Endothelial cell of umbilical vein (primary cell): ENCODE measurements at regions of chr7 and their contacts with region 1.

Region 1: DNA sequence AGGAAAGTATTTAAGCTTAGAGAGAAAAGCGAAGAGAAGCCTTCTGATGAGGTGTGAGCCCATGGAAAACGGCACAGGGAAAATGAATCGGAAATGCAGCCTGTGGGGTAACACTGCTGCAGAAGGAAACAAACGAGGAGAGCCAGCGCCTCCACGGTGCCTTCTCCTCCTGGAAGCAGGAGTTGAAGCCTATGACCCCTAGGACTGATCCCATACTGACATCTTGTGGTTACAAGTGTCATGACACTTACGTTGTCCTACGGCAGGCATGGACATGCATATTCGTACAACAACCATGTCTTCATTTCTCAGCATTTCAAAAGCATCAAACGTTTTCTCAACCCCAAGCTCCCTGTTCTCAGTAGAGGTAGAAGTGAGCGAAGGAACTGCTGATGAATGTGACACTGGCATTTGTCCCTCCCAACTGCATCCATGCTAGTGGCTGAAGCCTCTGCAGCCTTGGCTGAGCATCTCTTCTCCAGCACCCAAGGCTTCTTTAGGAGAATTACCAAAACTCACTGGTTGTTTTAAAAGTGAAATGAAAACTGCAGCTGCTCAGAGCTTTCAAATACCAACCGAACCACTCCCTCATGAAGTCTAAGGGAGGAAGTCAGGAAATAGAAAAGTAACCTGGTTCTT is 160.2 kb downstream of the JAZF1 start:
- DNase-seq: peak; percentile 80
- H3K4me3 ChIP-seq: no peak overlapping the region
- H3K27ac ChIP-seq: no peak overlapping the region
- H3K4me1 ChIP-seq: no peaks in the 10 kb centered on the region
- H3K27me3 ChIP-seq: no peaks in the 10 kb centered on the region
- CTCF ChIP-seq: peak; percentile 70 to 75
- POLR2A ChIP-seq: no peak

Region 2: GRCh38 chr7:27576360-27576944 is 444.0 kb before region 1 on chr7:
- CTCF ChIA-PET with region 1: no interaction called
- POLR2A ChIA-PET with region 1: no interaction called
- dilution Hi-C with region 1: no loop called
- intact Hi-C with region 1: loop called (anchors 5 kb)
- DNase-seq: peak; percentile 70
- H3K4me3 ChIP-seq: no peak overlapping the region
- H3K27ac ChIP-seq: no peak overlapping the region
- H3K4me1 ChIP-seq: no peaks in the 10 kb centered on the region
- H3K27me3 ChIP-seq: no peaks in the 10 kb centered on the region
- CTCF ChIP-seq: peak; percentile 22 to 26
- POLR2A ChIP-seq: no peak

Region 3: GRCh38 chr7:27689591-27690164 is 330.7 kb before region 1 on chr7:
- CTCF ChIA-PET with region 1: interaction called, 6 read pairs
- POLR2A ChIA-PET with region 1: no interaction called
- dilution Hi-C with region 1: no loop called
- intact Hi-C with region 1: loop called (anchors 1 kb)
- DNase-seq: peak; percentile 69
- H3K4me3 ChIP-seq: no peak overlapping the region
- H3K27ac ChIP-seq: no peak overlapping the region
- H3K4me1 ChIP-seq: peaks cover 10% of the 10 kb centered on the region
- H3K27me3 ChIP-seq: no peaks in the 10 kb centered on the region
- CTCF ChIP-seq: peak; percentile 42 to 72
- POLR2A ChIP-seq: no peak

Region 4: DNA sequence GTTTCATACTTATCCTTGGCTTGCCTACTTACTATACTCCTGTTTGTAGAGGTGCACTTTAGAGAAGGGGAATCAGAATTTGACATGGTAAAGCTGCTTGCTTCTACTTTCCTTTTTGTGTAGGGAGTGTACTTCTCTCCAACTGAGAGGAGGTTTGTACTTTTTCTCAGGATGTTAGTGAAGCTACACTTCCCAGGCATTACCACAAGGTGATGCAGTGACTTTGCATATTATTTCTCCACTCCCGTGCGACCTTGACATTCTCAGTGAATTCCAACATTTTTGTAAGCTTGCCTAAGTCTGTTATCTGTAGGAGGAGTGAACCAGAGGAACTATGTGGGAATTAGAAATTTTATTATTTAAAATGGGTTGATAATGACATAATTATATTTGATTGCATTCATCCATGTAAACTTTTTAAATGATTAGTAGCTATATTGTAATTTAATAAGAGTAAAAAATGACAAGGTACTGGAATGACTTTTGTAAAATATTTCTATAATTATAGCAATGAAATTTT is 275.3 kb before region 1 on chr7:
- CTCF ChIA-PET with region 1: interaction called, 12 read pairs
- POLR2A ChIA-PET with region 1: no interaction called
- dilution Hi-C with region 1: no loop called
- intact Hi-C with region 1: loop called (anchors 1 kb)
- DNase-seq: peak; percentile 85
- H3K4me3 ChIP-seq: no peak overlapping the region
- H3K27ac ChIP-seq: peak overlapping the region; percentile 49
- H3K4me1 ChIP-seq: peaks cover 11% of the 10 kb centered on the region
- H3K27me3 ChIP-seq: no peaks in the 10 kb centered on the region
- CTCF ChIP-seq: peak; percentile 54 to 65
- POLR2A ChIP-seq: no peak

Region 5: GRCh38 chr7:27784393-27785053 is 235.9 kb before region 1 on chr7:
- CTCF ChIA-PET with region 1: no interaction called
- POLR2A ChIA-PET with region 1: no interaction called
- dilution Hi-C with region 1: no loop called
- intact Hi-C with region 1: loop called (anchors 2 kb)
- DNase-seq: peak; percentile 85
- H3K4me3 ChIP-seq: no peak overlapping the region
- H3K27ac ChIP-seq: no peak overlapping the region
- H3K4me1 ChIP-seq: peaks cover 11% of the 10 kb centered on the region
- H3K27me3 ChIP-seq: no peaks in the 10 kb centered on the region
- CTCF ChIP-seq: peak; percentile 48 to 52
- POLR2A ChIP-seq: no peak

Region 6: GRCh38 chr7:27810186-27810585 is 210.2 kb before region 1 on chr7:
- CTCF ChIA-PET with region 1: no interaction called
- POLR2A ChIA-PET with region 1: no interaction called
- dilution Hi-C with region 1: no loop called
- intact Hi-C with region 1: loop called (anchors 10 kb)
- DNase-seq: no peak
- H3K4me3 ChIP-seq: no peak overlapping the region
- H3K27ac ChIP-seq: no peak overlapping the region
- H3K4me1 ChIP-seq: no peaks in the 10 kb centered on the region
- H3K27me3 ChIP-seq: no peaks in the 10 kb centered on the region
- CTCF ChIP-seq: no peak
- POLR2A ChIP-seq: no peak

Region 7: GRCh38 chr7:27933671-27934565 is 86.5 kb before region 1 on chr7:
- CTCF ChIA-PET with region 1: interaction called, 6 read pairs
- POLR2A ChIA-PET with region 1: no interaction called
- dilution Hi-C with region 1: no loop called
- intact Hi-C with region 1: loop called (anchors 2 kb)
- DNase-seq: peak; percentile 19
- H3K4me3 ChIP-seq: no peak overlapping the region
- H3K27ac ChIP-seq: no peak overlapping the region
- H3K4me1 ChIP-seq: no peaks in the 10 kb centered on the region
- H3K27me3 ChIP-seq: no peaks in the 10 kb centered on the region
- CTCF ChIP-seq: peak; percentile 13 to 22
- POLR2A ChIP-seq: no peak